ENCODE measurements at regions of chr14 and their contacts with region 1.

Region 1: GRCh38 chr14:74501135-74501614 is 7.6 kb downstream of the ISCA2 start:
- DNase-seq: peak; percentile 88 to 92
- H3K4me3 ChIP-seq: no peak overlapping the region
- H3K27ac ChIP-seq: peak overlapping the region; percentile 4 to 64
- H3K4me1 ChIP-seq: no peaks in the 10 kb centered on the region
- H3K27me3 ChIP-seq: no peaks in the 10 kb centered on the region
- CTCF ChIP-seq: peak; percentile 70 to 87 (median 82)
- POLR2A ChIP-seq: no peak

Region 2: DNA sequence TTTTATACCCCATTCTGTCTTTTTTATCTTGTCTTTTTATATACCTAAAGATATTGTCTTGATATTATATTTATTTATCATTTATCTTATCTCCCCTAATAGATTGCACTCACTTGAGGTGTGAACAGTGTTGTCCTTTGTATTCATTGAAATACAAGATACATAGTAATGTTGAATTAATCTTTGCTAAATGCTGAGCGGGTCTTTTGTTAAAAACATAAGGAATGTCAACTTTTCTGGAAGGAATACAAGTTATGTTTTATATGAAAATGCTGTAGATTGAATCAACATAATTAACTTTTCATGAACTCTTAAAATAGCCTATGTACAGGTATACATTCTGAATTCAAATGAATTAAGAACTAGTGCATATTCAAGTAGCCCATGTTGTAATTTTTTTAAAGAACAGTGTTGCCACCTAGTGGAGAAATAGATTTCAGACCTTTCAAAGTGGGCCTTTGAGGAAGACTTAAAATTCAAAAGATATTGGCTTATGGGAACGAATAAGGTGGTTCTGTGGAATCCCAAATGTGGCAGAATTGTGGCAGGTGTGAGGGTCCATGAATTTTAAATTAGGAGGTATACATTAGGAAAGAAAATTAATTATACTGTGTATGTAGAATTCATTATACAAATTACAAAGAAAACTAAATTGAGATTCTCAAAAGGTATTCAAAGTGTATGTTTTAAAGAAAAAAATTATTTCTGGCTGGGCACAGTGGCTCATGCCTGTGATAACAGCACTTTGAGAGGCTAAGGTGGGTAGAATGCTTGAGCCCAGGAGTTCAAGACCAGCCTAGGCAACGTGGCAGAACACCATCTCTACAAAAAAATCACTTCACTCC is 462.9 kb before region 1 on chr14:
- intact Hi-C with region 1: no loop called
- DNase-seq: no peak
- H3K4me3 ChIP-seq: no peak overlapping the region
- H3K27ac ChIP-seq: no peak overlapping the region
- H3K4me1 ChIP-seq: no peaks in the 10 kb centered on the region
- H3K27me3 ChIP-seq: no peaks in the 10 kb centered on the region
- CTCF ChIP-seq: peak; percentile 51 to 63 (median 59)
- POLR2A ChIP-seq: no peak

Region 3: GRCh38 chr14:74425525-74426201 is 75.5 kb before region 1 on chr14:
- intact Hi-C with region 1: no loop called
- DNase-seq: peak in 1 of 2 donors; percentile 37
- H3K4me3 ChIP-seq: no peak overlapping the region
- H3K27ac ChIP-seq: no peak overlapping the region
- H3K4me1 ChIP-seq: no peaks in the 10 kb centered on the region
- H3K27me3 ChIP-seq: no peaks in the 10 kb centered on the region
- CTCF ChIP-seq: no peak
- POLR2A ChIP-seq: no peak

Region 4: GRCh38 chr14:74595006-74595735 is 94.0 kb after region 1 on chr14:
- intact Hi-C with region 1: no loop called
- DNase-seq: peak; percentile 93 to 95
- H3K4me3 ChIP-seq: no peak overlapping the region
- H3K27ac ChIP-seq: peak overlapping the region; percentile 89 to 92
- H3K4me1 ChIP-seq: peaks cover 37 to 47% of the 10 kb centered on the region in 2 donors
- H3K27me3 ChIP-seq: no peaks in the 10 kb centered on the region
- CTCF ChIP-seq: no peak
- POLR2A ChIP-seq: no peak

Region 5: GRCh38 chr14:74612350-74613021 is 111.3 kb after region 1 on chr14:
- intact Hi-C with region 1: loop called (anchors 5 kb)
- DNase-seq: peak; percentile 74 to 83
- H3K4me3 ChIP-seq: peak overlapping the region; percentile 46 to 56
- H3K27ac ChIP-seq: peak overlapping the region; percentile 68 to 83
- H3K4me1 ChIP-seq: peaks cover 0 to 8% of the 10 kb centered on the region in 2 donors
- H3K27me3 ChIP-seq: no peaks in the 10 kb centered on the region
- CTCF ChIP-seq: peak; percentile 52 to 98 (median 84)
- POLR2A ChIP-seq: peak in 1 of 2 donors; percentile 22

Region 6: DNA sequence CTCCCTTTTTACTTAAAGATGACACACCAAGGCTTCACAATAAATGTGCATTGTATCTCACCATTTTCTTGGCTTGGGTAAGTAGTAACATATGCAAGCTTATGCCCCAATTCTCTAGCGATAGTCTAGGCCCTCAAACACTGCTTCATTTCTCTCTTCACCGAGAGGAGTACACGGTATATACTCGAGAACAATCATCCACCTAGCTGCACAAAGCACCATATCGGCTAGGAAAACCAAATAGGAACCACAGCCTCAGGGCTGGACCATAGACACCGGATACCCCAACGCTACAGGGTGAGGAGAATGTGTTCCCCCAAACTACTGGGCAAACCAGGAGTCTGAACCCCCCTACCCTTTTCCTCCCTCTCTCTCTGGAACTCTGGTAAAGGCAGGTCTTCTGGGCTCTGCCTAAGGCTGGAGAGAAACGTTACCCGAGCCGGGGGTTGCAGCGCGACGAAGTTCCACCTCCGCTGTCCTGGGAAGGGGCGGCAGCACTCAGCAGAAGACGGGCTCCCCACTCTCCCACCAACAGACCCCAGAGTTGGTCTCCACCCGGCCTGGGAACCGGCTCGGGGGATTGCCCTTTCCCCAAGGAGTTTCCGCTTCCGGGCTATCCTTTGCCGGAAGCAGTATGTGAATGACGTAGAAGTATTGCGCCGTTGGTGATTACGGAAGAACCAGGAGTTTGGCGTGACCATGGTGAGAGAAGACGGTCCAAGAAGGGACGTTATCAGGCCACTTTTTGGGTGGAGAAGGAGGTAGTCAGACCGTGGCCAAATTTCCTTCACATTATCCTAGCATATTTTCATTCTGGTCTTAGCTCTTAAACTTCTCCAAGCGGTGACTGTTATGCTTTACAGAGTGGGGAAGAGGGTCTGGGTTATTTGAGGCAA is 211.6 kb after region 1 on chr14 and contains the starts of genes AREL1 and FCF1:
- intact Hi-C with region 1: loop called (anchors 10 kb)
- DNase-seq: peak; percentile 79 to 85
- H3K4me3 ChIP-seq: peak within 1 kb of the TSS; percentile 57 to 91
- H3K27ac ChIP-seq: peak within 1 kb of the TSS; percentile 72 to 80
- H3K4me1 ChIP-seq: peaks cover 4 to 7% of the 10 kb centered on the region in 2 donors
- H3K27me3 ChIP-seq: no peaks in the 10 kb centered on the region
- CTCF ChIP-seq: peak in 2 of 4 experiments; percentile 9 to 15
- POLR2A ChIP-seq: peak; percentile 47 to 61
- total RNA-seq, gene AREL1: 2.1 to 33.8 (median 22.3) TPM
- total RNA-seq, gene FCF1: 6.4 to 116 (median 46.6) TPM